ENCODE measurements at regions of chr7 and their contacts with region 1.

Region 1: DNA sequence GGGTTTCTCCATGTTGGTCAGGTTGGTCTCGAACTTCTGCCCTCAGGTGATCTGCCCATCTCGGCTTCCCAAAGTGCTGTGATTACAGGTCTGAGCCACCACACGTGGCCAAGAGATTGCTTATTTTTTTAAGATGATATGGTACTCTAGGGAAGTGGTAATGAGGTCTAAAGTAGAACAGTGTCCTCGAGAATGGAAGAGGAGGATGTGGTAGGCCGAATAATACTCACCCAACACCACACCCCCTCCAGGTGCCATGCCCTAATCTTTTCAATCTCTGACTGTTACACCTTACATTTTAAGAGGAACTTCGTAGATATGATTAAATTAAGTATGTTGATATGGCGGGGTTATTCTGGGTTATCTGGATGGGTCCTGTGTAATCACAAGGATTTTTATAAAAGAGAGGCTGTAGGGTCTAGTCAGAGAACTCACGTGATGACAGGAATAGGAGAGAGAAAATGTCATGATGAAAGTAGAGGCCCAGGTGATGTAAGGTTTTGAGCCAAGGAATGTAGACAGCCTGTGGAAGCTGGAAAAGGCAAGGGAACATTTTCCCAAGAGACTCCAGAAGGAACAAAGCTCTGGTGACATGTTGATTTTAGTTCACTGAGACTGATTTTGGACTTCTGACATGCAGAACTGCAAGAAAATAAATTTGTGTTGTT is 29.5 kb downstream of the CDK13 start:
- DNase-seq: peak; percentile 59
- ATAC-seq: peak; percentile 79
- H3K4me3 Mint-ChIP-seq: no peak overlapping the region
- H3K27ac Mint-ChIP-seq: no peak overlapping the region
- H3K4me1 Mint-ChIP-seq: peaks cover 8% of the 10 kb centered on the region
- H3K27me3 Mint-ChIP-seq: no peaks in the 10 kb centered on the region

Region 2: GRCh38 chr7:39948956-39949928 is 30.3 kb before region 1 on chr7:
- CTCF ChIA-PET with region 1: interaction called, 17 read pairs
- POLR2A ChIA-PET with region 1: interaction called, 11 read pairs
- DNase-seq: peak; percentile 98
- ATAC-seq: peak; percentile 75
- H3K4me3 Mint-ChIP-seq: peak overlapping the region; percentile 95
- H3K27ac Mint-ChIP-seq: peak overlapping the region; percentile 100
- H3K4me1 Mint-ChIP-seq: peaks cover 39% of the 10 kb centered on the region
- H3K27me3 Mint-ChIP-seq: no peaks in the 10 kb centered on the region

Region 3: DNA sequence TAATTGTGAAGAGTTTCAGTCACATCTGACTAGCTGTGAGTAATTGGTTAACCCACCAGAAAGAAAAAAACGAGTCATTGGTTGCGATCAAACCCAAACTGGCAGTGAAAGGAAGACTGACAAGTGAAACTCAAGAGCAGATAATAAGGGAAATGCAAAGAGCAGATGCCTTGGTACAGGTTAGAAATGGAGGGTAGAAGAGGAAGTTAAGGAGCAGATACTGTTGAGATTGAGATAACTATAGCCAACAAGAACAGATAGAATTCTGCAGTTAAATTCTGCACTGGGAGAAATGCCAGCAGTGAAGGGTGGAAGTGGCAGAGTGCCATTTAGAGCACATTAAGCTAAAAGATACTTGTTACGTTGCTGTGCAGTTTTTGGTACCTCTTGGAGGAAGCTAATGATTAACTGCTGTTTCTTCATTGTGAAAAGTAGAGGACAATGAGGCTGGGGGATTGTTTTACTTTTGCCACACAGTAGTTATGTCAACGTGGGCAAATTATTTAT is 36.3 kb after region 1 on chr7:
- CTCF ChIA-PET with region 1: no interaction called
- POLR2A ChIA-PET with region 1: no interaction called
- DNase-seq: no peak
- ATAC-seq: no peak
- H3K4me3 Mint-ChIP-seq: no peak overlapping the region
- H3K27ac Mint-ChIP-seq: no peak overlapping the region
- H3K4me1 Mint-ChIP-seq: peaks cover 8% of the 10 kb centered on the region
- H3K27me3 Mint-ChIP-seq: no peaks in the 10 kb centered on the region

Region 4: DNA sequence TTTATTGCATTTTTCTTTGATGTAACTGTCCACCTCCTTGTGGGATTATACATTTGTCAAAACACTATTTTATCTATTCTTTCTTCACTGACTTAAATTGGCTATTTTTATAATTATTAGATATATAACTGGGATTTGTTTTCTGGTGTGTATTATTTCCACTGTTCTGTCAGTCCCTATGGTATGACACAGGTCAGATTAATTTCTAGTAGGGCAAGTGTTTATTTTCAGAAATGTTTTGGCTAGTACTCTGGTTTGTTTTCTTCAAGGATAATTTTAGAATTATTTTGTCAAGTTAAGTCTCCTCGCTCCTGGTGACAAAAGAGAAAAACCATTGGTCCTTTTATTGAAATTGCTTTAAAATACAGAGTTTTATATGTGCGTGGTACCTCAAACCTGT is 63.6 kb after region 1 on chr7:
- CTCF ChIA-PET with region 1: no interaction called
- POLR2A ChIA-PET with region 1: no interaction called
- DNase-seq: no peak
- ATAC-seq: no peak
- H3K4me3 Mint-ChIP-seq: no peak overlapping the region
- H3K27ac Mint-ChIP-seq: no peak overlapping the region
- H3K4me1 Mint-ChIP-seq: no peaks in the 10 kb centered on the region
- H3K27me3 Mint-ChIP-seq: no peaks in the 10 kb centered on the region